ENCODE measurements at regions of chr4 and their contacts with region 1.

Region 1: DNA sequence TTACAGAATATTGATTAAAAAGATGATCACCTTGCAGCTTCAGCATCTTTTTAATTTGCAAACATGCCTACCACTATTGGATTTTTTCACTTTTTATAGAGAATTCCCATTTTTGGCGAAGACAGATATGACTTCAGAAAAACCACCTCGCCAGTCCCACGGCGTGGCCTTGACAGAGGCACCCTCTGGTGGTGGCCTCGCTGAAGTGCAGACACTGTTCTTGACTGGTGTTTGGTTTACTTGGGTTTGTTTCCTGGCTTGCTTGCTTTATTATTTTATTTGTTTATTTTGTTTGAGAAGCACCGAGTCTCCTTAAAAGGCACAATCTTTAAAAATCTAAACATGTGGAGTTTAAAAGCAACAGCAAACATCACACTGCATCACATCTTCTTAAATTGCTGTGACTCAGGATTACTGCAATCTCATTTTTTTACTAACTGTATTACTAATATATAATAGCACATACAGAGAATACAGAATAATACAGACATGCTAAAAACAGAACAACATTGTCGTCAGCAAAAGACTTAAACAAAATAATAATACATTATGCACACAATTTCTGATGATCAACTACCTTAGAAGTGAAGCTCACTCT is 13.1 kb upstream of the AMTN start:
- DNase-seq: peak in 1 of 2 experiments; percentile 25
- H3K4me3 ChIP-seq: no peak overlapping the region
- H3K27ac ChIP-seq: no peak overlapping the region
- H3K4me1 ChIP-seq: no peaks in the 10 kb centered on the region
- H3K27me3 ChIP-seq: no peaks in the 10 kb centered on the region
- CTCF ChIP-seq: peak; percentile 81

Region 2: GRCh38 chr4:69896530-69897116 is 608.6 kb before region 1 on chr4:
- CTCF ChIA-PET with region 1: no interaction called
- POLR2A ChIA-PET with region 1: no interaction called
- intact Hi-C with region 1: loop called (anchors 5 kb)
- DNase-seq: no peak
- H3K4me3 ChIP-seq: no peak overlapping the region
- H3K27ac ChIP-seq: no peak overlapping the region
- H3K4me1 ChIP-seq: no peaks in the 10 kb centered on the region
- H3K27me3 ChIP-seq: no peaks in the 10 kb centered on the region
- CTCF ChIP-seq: peak; percentile 58

Region 3: GRCh38 chr4:70559211-70559830 is 54.1 kb after region 1 on chr4:
- CTCF ChIA-PET with region 1: no interaction called
- POLR2A ChIA-PET with region 1: no interaction called
- intact Hi-C with region 1: loop called (anchors 10 kb)
- DNase-seq: peak in 1 of 2 experiments; percentile 25
- H3K4me3 ChIP-seq: no peak overlapping the region
- H3K27ac ChIP-seq: no peak overlapping the region
- H3K4me1 ChIP-seq: no peaks in the 10 kb centered on the region
- H3K27me3 ChIP-seq: no peaks in the 10 kb centered on the region
- CTCF ChIP-seq: peak; percentile 74